Mammary epithelial cell (primary cell): ENCODE measurements at regions of chr5 and their contacts with region 1.

Region 1: DNA sequence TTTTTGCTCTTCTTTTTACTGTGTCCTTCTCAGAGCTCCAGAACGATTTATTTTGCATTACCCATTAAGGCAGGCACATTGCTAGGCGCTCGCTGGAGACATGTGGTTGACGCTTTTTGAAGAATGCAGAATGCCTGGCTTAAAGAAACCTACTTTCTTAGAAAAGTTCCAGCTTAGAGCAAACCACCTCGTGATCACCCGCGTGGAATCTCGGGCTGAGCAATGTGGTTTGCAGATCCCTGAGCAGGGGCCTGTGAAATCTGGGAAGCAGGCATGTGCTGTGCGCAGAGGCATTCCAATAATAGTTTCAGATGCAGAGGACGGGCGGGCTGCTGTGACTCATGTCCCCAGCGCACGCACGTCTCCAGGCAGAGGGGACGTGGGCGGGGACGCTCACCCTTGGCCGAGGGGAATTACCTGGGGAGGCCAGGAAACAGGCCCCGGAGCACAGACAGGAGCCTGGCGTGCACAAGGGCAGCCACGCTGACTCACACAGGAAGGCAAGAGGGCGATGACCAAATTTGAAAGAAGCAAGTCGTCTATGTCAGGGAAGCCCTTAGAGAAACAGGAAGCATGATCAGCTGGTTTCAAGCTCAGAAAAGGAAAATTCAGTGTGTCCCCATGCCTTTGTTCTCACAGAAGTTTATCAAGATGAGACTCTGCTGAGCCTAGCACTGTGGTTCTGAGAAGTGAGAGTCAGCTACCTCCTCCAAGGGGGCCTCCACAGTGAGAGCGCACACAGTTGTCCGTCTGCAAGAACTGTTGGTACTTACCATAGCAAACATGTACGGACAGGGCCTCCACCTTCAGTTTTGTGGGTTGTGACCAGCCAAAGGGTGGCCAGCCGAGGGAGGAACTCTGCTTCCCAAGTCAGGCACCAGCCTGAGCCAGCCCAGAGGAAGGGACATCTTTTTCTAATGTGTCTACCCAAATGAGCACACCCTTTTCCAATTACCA is 218.6 kb downstream of the PIK3R1 start:
- DNase-seq: peak; percentile 100
- H3K4me3 ChIP-seq: no peak overlapping the region
- H3K27ac ChIP-seq: peak overlapping the region; percentile 90
- H3K4me1 ChIP-seq: peaks cover 45% of the 10 kb centered on the region
- H3K27me3 ChIP-seq: no peaks in the 10 kb centered on the region
- CTCF ChIP-seq: no peak

Region 2: GRCh38 chr5:68114378-68115040 is 319.7 kb before region 1 on chr5:
- CTCF ChIA-PET with region 1: no interaction called
- dilution Hi-C with region 1: no loop called
- in situ Hi-C with region 1: no loop called
- intact Hi-C with region 1: no loop called
- DNase-seq: peak; percentile 65
- H3K4me3 ChIP-seq: no peak overlapping the region
- H3K27ac ChIP-seq: no peak overlapping the region
- H3K4me1 ChIP-seq: peaks cover 5% of the 10 kb centered on the region
- H3K27me3 ChIP-seq: no peaks in the 10 kb centered on the region
- CTCF ChIP-seq: no peak

Region 3: DNA sequence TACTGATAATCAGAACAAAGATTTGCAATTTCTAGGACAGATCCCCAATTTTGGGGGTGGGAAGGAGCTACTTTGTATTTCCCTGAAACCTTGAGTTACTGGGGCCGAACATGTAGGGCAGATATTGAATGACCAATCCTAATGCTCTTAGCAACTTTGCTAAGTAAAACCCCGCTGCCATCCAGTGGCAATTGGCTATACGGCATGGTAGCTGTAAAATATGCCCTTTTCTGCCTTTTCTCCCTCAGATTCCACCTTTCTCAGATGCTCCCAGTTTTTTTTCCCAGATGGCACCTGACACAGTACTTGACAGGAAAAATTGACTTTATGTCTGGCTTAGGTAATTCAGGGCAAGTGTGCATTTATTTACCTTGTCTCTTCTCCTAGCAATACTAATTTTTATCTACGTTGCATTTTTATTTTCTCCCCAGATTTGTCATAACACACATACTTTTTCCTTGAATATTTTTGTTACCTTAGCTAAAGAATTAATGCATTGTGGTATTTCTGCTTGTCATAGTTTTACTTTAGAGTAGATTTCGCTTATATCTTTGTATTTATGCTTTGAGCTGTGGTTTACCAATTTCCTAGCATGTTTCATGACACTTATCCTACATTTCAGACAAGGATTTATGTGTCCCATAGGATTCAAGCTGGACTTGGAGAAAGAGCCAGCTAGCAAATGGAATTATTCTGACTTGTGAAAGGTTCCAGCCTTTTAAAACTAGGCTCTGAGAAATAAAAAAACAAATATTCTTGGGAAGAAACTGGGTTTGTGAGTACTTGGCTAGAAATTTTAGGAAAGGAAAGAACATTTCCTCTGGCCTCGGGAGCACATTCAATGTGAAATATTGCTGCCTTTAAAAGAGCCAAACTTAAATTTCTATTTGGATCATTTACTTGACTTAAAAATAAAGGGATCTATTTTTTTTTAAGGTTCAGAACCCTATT is 181.3 kb before region 1 on chr5:
- CTCF ChIA-PET with region 1: no interaction called
- dilution Hi-C with region 1: no loop called
- in situ Hi-C with region 1: no loop called
- intact Hi-C with region 1: no loop called
- DNase-seq: peak; percentile 59
- H3K4me3 ChIP-seq: no peak overlapping the region
- H3K27ac ChIP-seq: peak overlapping the region; percentile 40
- H3K4me1 ChIP-seq: peaks cover 47% of the 10 kb centered on the region
- H3K27me3 ChIP-seq: no peaks in the 10 kb centered on the region
- CTCF ChIP-seq: peak; percentile 85 to 96

Region 4: DNA sequence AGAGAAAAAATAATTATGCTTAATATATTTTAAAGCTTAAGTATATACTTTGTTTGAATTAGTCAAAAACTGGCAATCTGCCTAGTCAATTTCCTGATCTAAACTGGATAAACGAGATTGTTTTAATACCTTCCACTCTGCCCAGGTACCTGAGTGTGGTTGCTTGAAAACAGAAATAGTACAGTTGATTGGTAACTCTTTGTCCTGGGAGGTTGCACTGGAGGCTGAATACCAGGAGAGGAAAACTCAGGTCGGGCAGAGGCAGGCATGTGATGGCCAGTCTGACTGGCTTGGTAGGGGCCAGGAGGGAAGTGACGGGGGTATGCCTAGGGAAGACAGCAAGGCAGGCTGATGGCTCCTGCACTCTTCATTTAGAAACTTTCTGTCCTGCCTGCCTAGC is 138.4 kb before region 1 on chr5:
- CTCF ChIA-PET with region 1: no interaction called
- dilution Hi-C with region 1: loop called (anchors 5 kb)
- in situ Hi-C with region 1: no loop called
- intact Hi-C with region 1: no loop called
- DNase-seq: peak; percentile 74
- H3K4me3 ChIP-seq: no peak overlapping the region
- H3K27ac ChIP-seq: peak overlapping the region; percentile 12
- H3K4me1 ChIP-seq: peaks cover 23% of the 10 kb centered on the region
- H3K27me3 ChIP-seq: no peaks in the 10 kb centered on the region
- CTCF ChIP-seq: no peak